Posterior vena cava (tissue), 2 donors: ENCODE measurements at regions of chr18 and their contacts with region 1.

Region 1: DNA sequence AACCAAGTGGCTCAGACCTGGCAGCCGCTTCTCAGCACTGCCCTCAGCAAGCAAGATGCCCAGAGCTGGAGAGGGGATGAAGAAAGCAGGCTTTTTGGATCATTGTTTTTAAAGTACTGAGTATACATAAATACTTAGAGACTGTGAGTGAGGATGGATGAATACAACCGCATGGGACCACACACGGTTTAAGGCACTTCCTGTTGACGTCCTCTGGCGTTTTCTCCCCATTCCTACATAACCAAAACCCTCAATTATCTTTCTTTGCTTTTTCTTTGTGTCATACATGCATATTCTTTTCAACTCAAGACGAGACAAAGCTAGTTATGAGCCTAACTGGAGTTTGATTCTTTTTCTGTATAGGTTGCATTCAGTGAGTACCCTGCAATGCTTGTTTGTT is 198.4 kb downstream of the GALR1 start:
- DNase-seq: no peak

Region 2: DNA sequence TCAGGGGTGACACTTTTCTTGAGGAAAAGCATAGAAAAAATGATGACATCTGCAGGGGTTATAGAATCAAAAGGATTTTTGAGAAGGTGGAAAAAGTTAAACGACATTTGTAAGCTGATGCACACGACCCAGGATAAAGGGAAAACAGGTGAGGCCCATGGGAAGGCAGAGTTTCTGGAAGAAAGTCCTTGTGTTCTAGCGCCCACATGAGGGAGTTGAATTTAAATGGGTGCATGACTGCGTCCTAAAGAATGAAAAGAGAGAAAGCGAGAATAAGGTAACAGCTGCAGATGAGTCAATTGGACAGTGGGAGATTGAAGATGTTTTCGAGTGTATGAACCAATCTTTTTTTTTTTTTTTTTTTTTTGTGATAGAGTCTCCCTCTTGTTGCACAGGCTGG is 40.3 kb before region 1 on chr18:
- intact Hi-C with region 1: loop called in 1 of 2 experiments (anchors 2 kb)
- DNase-seq: no peak

Region 3: GRCh38 chr18:77749089-77749488 is 301.0 kb after region 1 on chr18:
- intact Hi-C with region 1: no loop called
- DNase-seq: no peak